ENCODE measurements at regions of chr22 and their contacts with region 1.

Region 1: GRCh38 chr22:40024201-40025061 is 29.7 kb downstream of the FAM83F start:
- DNase-seq: peak; percentile 39
- H3K4me3 ChIP-seq: no peak overlapping the region
- H3K27ac ChIP-seq: no peak overlapping the region
- H3K4me1 ChIP-seq: no peaks in the 10 kb centered on the region
- H3K27me3 ChIP-seq: no peaks in the 10 kb centered on the region
- CTCF ChIP-seq: peak; percentile 76 to 96
- POLR2A ChIP-seq: no peak

Region 2: GRCh38 chr22:39556970-39557841 is 467.2 kb before region 1 on chr22:
- CTCF ChIA-PET with region 1: interaction called, 52 read pairs
- POLR2A ChIA-PET with region 1: no interaction called
- dilution Hi-C with region 1: loop called (anchors 25 kb)
- intact Hi-C with region 1: no loop called
- DNase-seq: no peak
- H3K4me3 ChIP-seq: no peak overlapping the region
- H3K27ac ChIP-seq: no peak overlapping the region
- H3K4me1 ChIP-seq: no peaks in the 10 kb centered on the region
- H3K27me3 ChIP-seq: peaks cover 31 to 33% of the 10 kb centered on the region in 2 experiments
- CTCF ChIP-seq: no peak
- POLR2A ChIP-seq: no peak

Region 3: DNA sequence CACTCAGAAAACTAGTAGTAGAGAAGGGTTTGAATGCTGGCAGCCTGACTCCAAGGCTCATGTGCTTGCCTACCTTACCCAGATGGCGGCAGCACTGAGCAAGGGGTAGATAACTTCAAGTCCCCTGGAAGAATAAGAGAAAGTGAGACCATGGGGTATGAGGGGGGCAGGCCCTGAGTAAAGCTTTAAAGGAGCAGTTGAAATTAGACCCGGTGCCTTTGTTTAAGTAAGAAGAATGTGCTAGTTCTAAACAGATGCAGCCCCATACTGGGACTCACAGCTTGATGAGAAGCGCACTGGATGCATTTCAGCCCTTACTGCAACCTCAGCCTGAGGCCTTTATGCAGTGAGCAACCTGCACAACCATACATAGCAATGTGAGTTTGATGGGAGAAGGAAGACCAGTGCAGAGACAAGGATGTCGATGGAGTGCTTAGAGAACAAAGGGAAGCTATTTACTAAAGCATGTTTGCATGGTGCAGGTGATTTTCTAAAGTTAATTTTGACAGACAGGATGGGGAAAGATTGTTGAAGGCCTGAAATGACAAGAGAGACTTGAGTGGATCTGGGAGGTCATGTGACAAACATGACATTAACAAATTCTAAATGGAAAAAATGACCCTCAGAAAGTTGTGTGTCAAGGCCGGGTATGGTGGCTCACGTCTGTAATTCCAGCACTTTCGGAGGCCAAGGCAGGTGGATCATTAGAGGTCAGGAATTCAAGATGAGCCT is 91.3 kb before region 1 on chr22:
- CTCF ChIA-PET with region 1: interaction called, 97 read pairs
- POLR2A ChIA-PET with region 1: no interaction called
- dilution Hi-C with region 1: no loop called
- intact Hi-C with region 1: loop called (anchors 1 kb)
- DNase-seq: peak; percentile 23
- H3K4me3 ChIP-seq: no peak overlapping the region
- H3K27ac ChIP-seq: no peak overlapping the region
- H3K4me1 ChIP-seq: no peaks in the 10 kb centered on the region
- H3K27me3 ChIP-seq: peaks cover 38 to 47% of the 10 kb centered on the region in 2 experiments
- CTCF ChIP-seq: peak; percentile 49 to 54
- POLR2A ChIP-seq: no peak

Region 4: DNA sequence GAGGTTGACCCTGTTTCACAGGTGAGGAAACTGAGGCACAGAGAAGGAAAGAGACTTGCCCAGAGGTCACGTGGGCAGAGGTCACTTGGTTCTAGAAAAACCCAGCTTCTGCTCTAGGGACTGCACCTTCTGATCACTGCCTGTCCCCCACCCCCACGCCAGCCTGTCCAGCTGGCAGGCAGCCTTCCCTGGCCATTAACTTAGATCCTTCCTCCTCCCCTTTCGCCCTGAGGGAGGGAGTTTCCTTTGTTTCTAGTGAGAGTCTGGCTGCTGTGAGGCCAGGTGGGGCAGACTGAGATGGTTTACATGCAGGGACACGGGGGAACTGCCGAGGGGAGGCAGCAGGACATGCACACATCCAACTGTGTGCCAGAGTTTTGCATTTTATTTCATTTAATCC is 26.5 kb before region 1 on chr22:
- CTCF ChIA-PET with region 1: interaction called, 11 read pairs
- POLR2A ChIA-PET with region 1: no interaction called
- dilution Hi-C with region 1: no loop called
- intact Hi-C with region 1: no loop called
- DNase-seq: peak; percentile 48
- H3K4me3 ChIP-seq: no peak overlapping the region
- H3K27ac ChIP-seq: no peak overlapping the region
- H3K4me1 ChIP-seq: no peaks in the 10 kb centered on the region
- H3K27me3 ChIP-seq: peaks cover 22 to 26% of the 10 kb centered on the region in 2 experiments
- CTCF ChIP-seq: no peak
- POLR2A ChIP-seq: no peak

Region 5: DNA sequence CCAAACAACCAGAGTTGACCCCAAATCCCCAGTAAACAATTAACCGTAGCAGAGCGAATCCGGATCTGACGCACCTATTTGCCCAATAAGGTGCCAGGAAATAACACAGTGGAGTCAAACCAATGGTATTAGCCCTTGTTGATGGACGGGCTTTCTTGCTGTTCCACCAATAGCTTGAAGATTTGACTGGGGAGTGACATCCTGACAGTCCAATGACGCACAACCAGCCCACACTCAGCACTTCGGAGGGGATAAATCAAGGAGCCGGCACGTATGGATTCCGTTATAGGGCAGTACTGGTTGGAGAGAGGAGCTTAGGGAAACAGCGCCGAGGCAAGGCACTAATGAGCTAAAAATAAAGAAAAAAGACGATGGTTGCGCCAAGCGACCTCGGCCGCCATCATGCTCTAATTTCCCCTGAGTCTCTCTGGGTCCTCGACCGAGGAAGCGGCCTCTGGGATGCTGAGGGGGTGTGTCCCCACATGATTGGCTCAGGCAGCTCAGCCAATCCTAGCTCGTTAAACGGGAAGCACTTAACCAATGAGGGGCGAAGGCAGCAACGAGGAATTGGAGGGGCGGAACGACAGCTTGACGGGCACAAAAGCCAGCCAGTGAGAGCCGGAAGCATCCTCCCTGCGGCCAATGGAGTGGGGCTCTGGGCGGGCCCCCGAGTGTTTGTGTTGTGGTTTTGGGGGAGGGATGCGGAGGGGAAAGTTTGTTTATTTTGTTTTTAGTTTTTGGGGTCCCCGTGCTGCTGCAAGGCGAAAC is 19.9 kb after region 1 on chr22:
- CTCF ChIA-PET with region 1: interaction called, 17 read pairs
- POLR2A ChIA-PET with region 1: no interaction called
- dilution Hi-C with region 1: no loop called
- intact Hi-C with region 1: no loop called
- DNase-seq: peak; percentile 99
- H3K4me3 ChIP-seq: peak overlapping the region; percentile 48 to 95 (median 68)
- H3K27ac ChIP-seq: peak overlapping the region; percentile 87
- H3K4me1 ChIP-seq: peaks cover 19% of the 10 kb centered on the region
- H3K27me3 ChIP-seq: peaks cover 0 to 16% of the 10 kb centered on the region in 2 experiments
- CTCF ChIP-seq: no peak
- POLR2A ChIP-seq: no peak

Region 6: DNA sequence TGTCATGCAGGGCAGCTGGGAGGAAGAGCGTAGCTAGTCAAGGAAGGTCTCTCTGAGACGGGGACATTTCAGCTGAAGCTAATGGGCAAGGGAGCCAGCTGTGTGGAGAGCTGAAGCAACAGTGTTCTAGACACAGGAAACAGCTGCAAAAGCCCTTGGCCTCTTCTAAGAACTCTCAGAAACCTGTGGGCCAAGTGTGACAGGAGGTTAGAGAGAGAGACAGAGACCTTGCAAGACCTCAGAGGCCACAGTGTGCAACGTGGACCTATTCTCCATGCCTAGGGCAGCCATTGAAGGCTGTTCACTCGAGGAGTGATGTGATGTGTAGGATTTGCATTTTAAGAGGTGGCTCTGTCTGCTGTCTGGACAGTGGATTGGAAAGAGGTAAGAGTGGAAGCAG is 104.6 kb after region 1 on chr22:
- CTCF ChIA-PET with region 1: no interaction called
- POLR2A ChIA-PET with region 1: no interaction called
- dilution Hi-C with region 1: no loop called
- intact Hi-C with region 1: no loop called
- DNase-seq: no peak
- H3K4me3 ChIP-seq: no peak overlapping the region
- H3K27ac ChIP-seq: no peak overlapping the region
- H3K4me1 ChIP-seq: no peaks in the 10 kb centered on the region
- H3K27me3 ChIP-seq: no peaks in the 10 kb centered on the region
- CTCF ChIP-seq: no peak
- POLR2A ChIP-seq: no peak

Region 7: DNA sequence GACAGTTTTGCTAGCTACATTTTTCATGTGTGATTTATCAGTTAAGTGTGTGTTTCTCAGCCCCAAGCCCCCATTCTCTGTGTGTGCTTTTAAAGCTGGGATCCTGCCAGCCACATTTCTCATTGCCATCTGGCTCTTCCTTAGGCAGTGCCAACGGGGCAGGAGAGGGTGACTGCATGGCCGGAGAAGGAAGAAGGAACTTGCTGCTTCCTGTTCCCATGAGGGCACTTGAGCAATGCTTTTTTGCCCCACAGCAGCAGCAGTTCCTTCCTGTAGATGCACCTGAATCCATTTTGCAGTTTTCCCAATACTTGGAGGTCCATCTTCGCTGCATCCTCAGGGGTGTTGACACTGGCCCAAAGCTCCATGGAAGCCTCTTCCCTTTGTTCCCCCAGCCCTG is 190.8 kb after region 1 on chr22:
- CTCF ChIA-PET with region 1: no interaction called
- POLR2A ChIA-PET with region 1: no interaction called
- dilution Hi-C with region 1: no loop called
- intact Hi-C with region 1: no loop called
- DNase-seq: peak; percentile 76
- H3K4me3 ChIP-seq: no peak overlapping the region
- H3K27ac ChIP-seq: no peak overlapping the region
- H3K4me1 ChIP-seq: peaks cover 27% of the 10 kb centered on the region
- H3K27me3 ChIP-seq: no peaks in the 10 kb centered on the region
- CTCF ChIP-seq: no peak
- POLR2A ChIP-seq: no peak